Left ventricle myocardium inferior (tissue), 1 donor: ENCODE measurements at regions of chr7 and their contacts with region 1.

Region 1: GRCh38 chr7:50793115-50793946 is 10.6 kb upstream of the GRB10 start:
- DNase-seq: peak; percentile 76
- H3K4me3 ChIP-seq: peak overlapping the region; percentile 81
- H3K27ac ChIP-seq: peak overlapping the region; percentile 91
- H3K4me1 ChIP-seq: peaks cover 43% of the 10 kb centered on the region
- H3K27me3 ChIP-seq: no peaks in the 10 kb centered on the region
- CTCF ChIP-seq: no peak

Region 2: DNA sequence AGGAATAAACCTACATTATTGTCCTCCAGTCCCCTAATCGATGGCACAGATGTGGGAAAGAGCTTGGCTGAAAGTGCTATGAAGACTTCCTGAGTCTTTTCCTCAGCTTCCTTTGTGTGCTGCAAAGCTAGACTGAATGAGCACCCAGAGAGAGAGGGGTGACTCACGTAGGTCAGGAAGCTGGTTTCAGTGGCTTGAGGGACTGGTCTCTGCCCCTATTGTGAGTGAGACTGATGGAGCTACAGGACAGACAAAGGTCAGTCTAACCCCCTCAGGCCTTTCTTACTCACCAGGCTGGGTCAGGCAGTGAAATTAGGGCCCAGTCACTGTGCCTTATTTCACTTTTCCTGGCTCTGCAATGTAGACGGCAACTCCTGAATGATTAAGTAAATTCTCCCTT is 160.5 kb after region 1 on chr7:
- intact Hi-C with region 1: loop called (anchors 10 kb)
- DNase-seq: no peak
- H3K4me3 ChIP-seq: no peak overlapping the region
- H3K27ac ChIP-seq: peak overlapping the region; percentile 59
- H3K4me1 ChIP-seq: peaks cover 36% of the 10 kb centered on the region
- H3K27me3 ChIP-seq: no peaks in the 10 kb centered on the region
- CTCF ChIP-seq: no peak

Region 3: DNA sequence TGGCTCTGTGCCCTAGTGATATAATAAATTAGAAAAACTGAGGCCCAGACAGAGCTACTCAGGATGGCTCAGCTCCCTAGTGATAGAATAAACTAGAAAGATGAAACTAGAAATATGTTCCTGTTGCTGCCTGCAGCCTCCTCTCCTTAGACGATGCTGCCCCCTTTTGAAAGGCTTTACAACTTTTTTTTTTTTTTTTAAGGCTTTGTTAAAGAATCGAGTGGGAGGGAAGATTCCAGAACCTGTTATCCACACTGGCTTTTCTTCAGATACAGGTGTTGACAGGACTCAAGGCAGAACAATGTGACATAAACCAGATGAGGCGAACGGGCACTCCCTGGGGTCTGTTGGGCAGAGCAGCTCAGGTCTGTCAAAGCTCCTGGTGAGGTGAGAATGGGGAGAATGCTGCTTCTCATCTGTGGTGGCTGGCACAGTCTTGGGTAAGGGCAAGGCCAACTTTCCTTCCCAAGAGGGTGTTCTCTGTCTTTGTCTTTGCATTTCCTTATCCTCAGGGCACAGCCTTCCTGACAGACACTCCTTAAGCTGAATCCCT is 348.2 kb after region 1 on chr7:
- intact Hi-C with region 1: loop called (anchors 5 kb)
- DNase-seq: no peak
- H3K4me3 ChIP-seq: no peak overlapping the region
- H3K27ac ChIP-seq: peak overlapping the region; percentile 79
- H3K4me1 ChIP-seq: peaks cover 57% of the 10 kb centered on the region
- H3K27me3 ChIP-seq: no peaks in the 10 kb centered on the region
- CTCF ChIP-seq: peak; percentile 73